PC-9 (cell line): ENCODE measurements at regions of chr17 and their contacts with region 1.

Region 1: DNA sequence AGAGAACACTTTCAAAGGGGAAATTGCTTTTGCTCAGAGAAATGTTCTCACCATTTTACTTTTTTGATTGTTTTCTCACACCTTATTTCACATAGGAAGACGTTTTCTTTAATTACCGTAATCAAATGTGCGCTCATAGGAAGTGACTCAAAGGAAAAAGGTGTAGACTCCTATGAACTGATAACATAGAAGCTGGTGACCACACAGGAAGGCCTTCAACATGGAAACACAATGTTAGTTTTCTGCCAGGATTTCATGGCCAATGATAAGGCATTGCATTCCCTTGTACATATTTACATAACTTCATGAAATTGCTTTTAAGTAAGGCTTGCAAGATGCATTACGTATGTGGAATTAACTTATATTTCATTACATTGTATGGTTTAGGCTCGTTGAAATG is 40.9 kb upstream of the KCNJ16 start:
- DNase-seq: no peak
- H3K4me3 ChIP-seq: no peak overlapping the region
- H3K27ac ChIP-seq: no peak overlapping the region
- H3K4me1 ChIP-seq: no peaks in the 10 kb centered on the region
- H3K27me3 ChIP-seq: no peaks in the 10 kb centered on the region
- CTCF ChIP-seq: no peak

Region 2: DNA sequence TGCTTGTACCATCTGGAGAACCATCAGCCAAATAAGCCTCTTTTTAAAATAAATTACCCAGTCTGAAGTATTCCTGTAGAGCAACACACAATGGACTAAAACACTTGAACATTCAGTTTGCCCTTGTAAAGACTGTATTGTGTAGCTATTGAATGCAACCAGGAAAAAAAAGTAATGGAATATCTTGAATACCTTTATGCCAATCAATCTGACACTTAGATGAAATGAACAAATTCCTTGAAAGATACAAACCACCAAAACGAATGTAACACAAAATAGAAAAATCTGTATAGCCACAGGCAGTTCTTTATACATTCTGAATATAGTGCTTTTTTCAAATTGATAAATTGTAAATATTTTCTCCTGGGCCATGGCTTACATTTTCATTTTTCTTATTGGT is 22.4 kb before region 1 on chr17:
- CTCF ChIA-PET with region 1: no interaction called
- POLR2A ChIA-PET with region 1: no interaction called
- intact Hi-C with region 1: loop called (anchors 1 kb)
- DNase-seq: no peak
- H3K4me3 ChIP-seq: no peak overlapping the region
- H3K27ac ChIP-seq: no peak overlapping the region
- H3K4me1 ChIP-seq: no peaks in the 10 kb centered on the region
- H3K27me3 ChIP-seq: no peaks in the 10 kb centered on the region
- CTCF ChIP-seq: no peak